Head of caudate nucleus (tissue), 42 donors: ENCODE measurements at regions of chr11 and their contacts with region 1.

Region 1: DNA sequence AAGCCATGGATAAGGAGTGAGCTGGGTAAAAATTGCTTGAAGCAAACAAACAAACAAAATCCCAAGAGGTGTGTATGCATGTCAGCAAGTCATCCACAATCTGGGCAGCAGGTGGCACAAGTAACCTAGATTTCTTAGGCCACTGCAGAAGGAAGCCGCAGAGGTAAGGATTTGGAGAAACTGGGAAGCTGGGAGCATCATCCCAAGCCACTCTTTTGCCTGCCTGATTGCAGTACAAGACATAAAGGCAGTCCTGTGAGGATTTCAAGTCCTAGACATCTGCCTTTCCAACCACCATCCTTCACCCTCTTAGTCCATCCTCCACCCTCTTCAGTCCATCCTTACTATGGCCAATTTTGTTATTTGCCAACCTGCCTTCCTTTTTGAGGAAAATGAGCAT is 67.2 kb upstream of the BMAL1 start:
- DNase-seq: peak in 41 of 42 donors; percentile 36 to 89 (median 70)

Region 2: GRCh38 chr11:13261591-13262061 is 51.2 kb after region 1 on chr11:
- intact Hi-C with region 1: no loop called
- DNase-seq: no peak

Region 3: DNA sequence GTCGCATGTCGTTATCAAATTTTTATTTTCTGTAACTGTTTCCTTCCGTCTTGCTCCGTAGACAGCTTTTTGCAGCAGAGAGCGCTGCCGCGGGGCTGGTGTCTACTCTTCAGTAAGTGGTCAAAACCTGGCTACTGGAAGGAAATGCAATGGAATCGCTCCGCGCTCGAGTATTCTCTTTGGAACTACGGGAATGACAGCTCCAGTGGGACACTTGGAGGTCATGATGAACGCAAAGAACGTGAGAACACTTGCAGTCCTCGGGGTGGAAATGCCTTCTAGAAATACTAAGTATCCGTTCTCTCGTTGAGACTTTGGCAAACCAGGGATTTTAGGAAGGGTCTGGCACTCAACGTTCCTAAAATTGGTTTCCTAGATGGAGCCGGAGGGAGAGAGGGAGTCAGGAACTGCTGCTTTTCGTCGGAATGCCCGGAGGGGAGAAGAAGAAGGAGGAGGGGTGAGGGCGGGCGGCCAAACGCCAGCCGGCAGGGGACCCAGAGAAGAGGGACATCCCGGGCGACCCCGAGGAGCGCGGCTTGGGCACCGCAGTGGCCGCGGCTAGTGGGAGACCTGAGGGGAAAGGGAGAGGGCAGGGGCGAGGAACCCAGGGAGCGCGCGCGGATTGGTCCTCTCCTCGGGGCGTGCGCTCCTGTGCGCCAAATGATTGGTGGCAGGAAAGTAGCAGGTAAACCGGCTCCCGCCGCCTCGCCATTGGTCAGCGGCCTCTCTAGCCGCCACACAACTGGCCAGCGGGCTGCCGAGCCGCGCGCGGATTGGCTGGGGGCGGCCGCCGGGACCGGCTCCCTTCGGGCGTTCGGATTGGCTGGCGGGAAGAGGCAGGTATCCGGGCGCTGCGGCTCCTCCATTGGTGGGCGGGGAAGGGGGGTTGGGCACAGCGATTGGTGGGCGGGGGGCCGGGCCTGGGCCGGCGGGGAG is 66.7 kb after region 1 on chr11:
- intact Hi-C with region 1: loop called (anchors 5 kb)
- DNase-seq: peak; percentile 89 to 98 (median 96)

Region 4: DNA sequence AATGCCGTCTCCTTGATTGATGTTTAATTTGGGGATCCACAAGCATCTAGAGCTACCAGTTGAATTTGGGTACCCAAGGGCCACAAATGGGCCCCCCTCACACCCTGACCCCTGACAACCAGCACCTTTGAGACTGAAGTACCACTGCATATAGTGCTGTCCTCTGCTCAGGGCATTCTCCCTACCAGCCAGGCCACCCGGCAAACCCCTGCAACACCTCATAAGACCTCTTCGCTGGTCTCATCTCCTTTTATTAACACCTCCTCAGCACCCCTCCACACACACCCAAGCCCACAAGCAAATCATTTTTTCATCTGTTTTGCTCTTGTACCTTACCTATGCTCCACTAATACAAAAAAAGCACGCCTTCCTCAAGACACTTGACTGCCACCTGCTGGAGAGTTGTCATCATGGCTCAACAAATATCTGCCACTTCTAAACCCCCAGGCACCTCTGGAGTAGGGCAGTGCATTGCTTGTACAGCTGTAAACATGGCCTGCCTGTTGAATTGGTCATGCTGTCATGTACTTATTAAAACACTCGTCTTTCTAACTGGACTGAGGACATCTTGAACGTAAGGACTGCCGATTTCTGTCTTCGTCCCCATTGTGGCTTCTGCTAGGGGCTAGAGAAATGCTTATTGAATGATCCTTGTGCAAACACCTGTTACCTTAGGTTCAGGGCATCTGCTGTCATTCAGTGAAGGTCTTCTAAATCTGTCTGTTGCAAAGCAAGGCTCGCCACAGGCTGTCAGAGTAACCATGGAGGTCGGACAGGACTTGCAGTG is 133.7 kb after region 1 on chr11:
- intact Hi-C with region 1: loop called (anchors 10 kb)
- DNase-seq: peak in 40 of 42 donors; percentile 36 to 89 (median 72)